ENCODE measurements at regions of chr6 and their contacts with region 1.

Region 1: DNA sequence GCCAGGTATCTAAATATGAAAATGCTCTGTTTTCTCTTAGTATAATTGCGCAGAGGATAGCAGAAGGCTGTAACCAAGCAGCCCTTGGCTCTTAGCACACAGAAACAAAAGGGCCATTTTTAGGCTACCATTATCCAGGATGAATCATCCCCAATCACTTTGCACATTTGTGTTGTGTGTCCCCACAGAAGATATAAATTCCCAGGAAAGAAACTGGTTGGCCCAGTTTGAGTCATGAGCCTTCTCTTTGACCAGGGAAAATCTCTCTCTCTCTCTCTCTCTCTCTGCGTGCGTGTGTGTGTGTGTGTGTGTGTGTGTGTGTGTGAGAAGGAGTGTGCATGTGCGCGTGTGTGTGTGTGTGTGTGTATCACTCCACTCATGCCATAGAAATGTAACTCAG is 178.5 kb downstream of the FRK start:
- DNase-seq: no peak

Region 2: GRCh38 chr6:115753446-115753845 is 128.7 kb before region 1 on chr6:
- intact Hi-C with region 1: loop called in 1 of 2 experiments (anchors 5 kb)
- DNase-seq: no peak